ENCODE measurements at regions of chr6 and their contacts with region 1.

Region 1: GRCh38 chr6:43181942-43182860 is at the start of gene CUL9:
- DNase-seq: peak; percentile 93 to 94 (median 94)
- ATAC-seq: peak; percentile 93
- H3K4me3 ChIP-seq: peak within 1 kb of the TSS; percentile 68
- H3K27ac ChIP-seq: peak within 1 kb of the TSS; percentile 85
- H3K4me1 ChIP-seq: peaks cover 37 to 51% of the 10 kb centered on the region in 2 experiments
- H3K27me3 ChIP-seq: no peaks in the 10 kb centered on the region
- CTCF ChIP-seq: no peak
- EP300 ChIP-seq: no peak
- POLR2A ChIP-seq: peak; percentile 83
- RAD21 ChIP-seq: no peak
- polyA plus RNA-seq, gene CUL9: 0.50 to 0.51 TPM

Region 2: DNA sequence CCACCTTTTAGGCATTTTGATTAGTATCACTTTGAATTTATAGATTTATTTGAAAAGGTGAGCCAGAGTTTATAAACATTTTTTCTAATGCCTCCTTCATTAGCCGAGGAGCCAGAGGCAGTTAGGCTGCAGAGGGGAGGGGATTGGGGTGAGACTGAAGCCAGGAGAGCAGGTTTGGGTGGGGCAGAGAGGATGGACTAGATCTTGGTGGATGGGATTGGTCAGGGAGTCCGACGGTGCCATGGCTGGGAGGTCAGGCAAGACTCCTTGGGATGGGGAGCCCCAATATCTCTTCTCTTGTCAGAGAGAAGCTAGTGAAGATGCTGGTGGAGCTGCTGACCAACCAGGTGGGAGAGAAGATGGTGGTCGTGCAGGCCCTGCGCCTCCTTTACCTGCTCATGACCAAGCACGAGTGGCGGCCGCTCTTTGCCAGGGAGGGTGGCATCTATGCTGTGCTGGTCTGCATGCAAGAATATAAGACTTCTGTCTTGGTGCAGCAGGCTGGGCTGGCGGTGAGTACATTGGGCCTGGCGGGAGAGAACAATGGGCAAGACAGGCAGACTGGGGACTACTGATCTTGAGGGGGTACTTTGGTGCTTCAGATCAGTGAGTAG is 10.6 kb after region 1 on chr6:
- CTCF ChIA-PET with region 1: interaction called, 3 read pairs
- POLR2A ChIA-PET with region 1: interaction called, 14 read pairs
- in situ Hi-C with region 1: no loop called
- intact Hi-C with region 1: no loop called
- DNase-seq: no peak
- ATAC-seq: no peak
- H3K4me3 ChIP-seq: no peak overlapping the region
- H3K27ac ChIP-seq: no peak overlapping the region
- H3K4me1 ChIP-seq: peaks cover 0 to 13% of the 10 kb centered on the region in 2 experiments; a peak in 4 of 5 replicates
- H3K27me3 ChIP-seq: no peaks in the 10 kb centered on the region
- CTCF ChIP-seq: no peak
- EP300 ChIP-seq: no peak
- POLR2A ChIP-seq: no peak
- RAD21 ChIP-seq: no peak

Measured in K562 (cell line).